ENCODE measurements at regions of chr15 and their contacts with region 1.

Region 1: GRCh38 chr15:65869127-65869953 is at the start of gene RAB11A:
- DNase-seq: peak; percentile 94 to 96
- H3K4me3 ChIP-seq: peak within 1 kb of the TSS; percentile 96
- H3K4me3 Mint-ChIP-seq: peak within 1 kb of the TSS; percentile 98
- H3K27ac Mint-ChIP-seq: peak within 1 kb of the TSS; percentile 97
- H3K4me1 ChIP-seq: no peaks in the 10 kb centered on the region
- H3K4me1 Mint-ChIP-seq: peaks cover 10% of the 10 kb centered on the region
- H3K27me3 ChIP-seq: no peaks in the 10 kb centered on the region
- H3K27me3 Mint-ChIP-seq: peaks cover 3% of the 10 kb centered on the region
- CTCF ChIP-seq: peak in 1 of 2 experiments; percentile 47
- total RNA-seq, gene RAB11A: 208 and 232 TPM in 2 replicates

Region 2: DNA sequence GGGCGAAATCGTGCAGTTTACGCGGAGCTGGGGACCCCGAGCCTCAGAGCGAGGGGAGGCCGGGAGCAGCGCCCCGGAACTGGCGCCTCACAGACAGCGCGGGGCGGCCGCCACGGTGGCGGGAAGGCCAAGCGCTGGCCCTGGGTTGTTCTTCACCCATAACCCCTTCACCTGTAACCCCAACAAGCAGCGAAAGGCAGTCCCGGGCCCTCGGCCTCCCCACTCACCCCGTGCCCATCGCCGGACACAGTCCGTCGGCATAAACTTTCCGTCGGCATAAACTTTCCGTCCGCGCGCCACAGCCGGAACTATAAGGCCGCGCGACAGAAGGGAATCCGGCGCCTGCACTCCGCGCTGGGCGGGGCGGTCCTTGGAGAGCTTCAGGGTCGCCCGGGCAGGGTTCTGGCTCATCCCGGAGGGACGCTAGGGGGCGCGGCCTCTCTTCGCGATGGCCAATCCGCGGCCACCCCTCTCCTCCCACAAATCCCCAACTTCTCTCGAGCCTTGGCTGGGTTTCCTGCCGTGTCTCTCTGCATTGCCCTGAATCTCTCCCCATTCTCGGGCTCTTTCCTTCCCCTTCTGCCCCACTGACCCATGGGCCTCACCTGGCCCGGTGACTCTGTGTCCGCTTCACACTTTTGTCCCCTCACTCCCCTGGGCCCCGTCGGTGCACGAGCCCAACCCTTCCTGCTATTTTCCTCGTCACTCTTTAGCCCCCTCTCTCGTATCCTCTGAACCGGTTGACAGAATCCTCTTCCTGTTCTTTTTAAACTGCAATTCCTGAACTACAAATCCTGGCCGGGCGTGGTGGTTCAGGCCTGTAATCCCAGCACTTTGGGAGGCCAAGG is 258.2 kb before region 1 on chr15 and contains the start of gene INTS14:
- CTCF ChIA-PET with region 1: interaction called, 9 read pairs
- POLR2A ChIA-PET with region 1: interaction called, 5 read pairs
- intact Hi-C with region 1: loop called (anchors 1 kb)
- DNase-seq: peak; percentile 96 to 98
- H3K4me3 ChIP-seq: peak within 1 kb of the TSS; percentile 63
- H3K4me3 Mint-ChIP-seq: peak within 1 kb of the TSS; percentile 97
- H3K27ac Mint-ChIP-seq: peak within 1 kb of the TSS; percentile 99
- H3K4me1 ChIP-seq: peaks cover 9% of the 10 kb centered on the region
- H3K4me1 Mint-ChIP-seq: peaks cover 7% of the 10 kb centered on the region
- H3K27me3 ChIP-seq: no peaks in the 10 kb centered on the region
- H3K27me3 Mint-ChIP-seq: no peaks in the 10 kb centered on the region
- CTCF ChIP-seq: peak; percentile 66 to 69
- total RNA-seq, gene INTS14: 37.7 and 38.2 TPM in 2 replicates

Region 3: DNA sequence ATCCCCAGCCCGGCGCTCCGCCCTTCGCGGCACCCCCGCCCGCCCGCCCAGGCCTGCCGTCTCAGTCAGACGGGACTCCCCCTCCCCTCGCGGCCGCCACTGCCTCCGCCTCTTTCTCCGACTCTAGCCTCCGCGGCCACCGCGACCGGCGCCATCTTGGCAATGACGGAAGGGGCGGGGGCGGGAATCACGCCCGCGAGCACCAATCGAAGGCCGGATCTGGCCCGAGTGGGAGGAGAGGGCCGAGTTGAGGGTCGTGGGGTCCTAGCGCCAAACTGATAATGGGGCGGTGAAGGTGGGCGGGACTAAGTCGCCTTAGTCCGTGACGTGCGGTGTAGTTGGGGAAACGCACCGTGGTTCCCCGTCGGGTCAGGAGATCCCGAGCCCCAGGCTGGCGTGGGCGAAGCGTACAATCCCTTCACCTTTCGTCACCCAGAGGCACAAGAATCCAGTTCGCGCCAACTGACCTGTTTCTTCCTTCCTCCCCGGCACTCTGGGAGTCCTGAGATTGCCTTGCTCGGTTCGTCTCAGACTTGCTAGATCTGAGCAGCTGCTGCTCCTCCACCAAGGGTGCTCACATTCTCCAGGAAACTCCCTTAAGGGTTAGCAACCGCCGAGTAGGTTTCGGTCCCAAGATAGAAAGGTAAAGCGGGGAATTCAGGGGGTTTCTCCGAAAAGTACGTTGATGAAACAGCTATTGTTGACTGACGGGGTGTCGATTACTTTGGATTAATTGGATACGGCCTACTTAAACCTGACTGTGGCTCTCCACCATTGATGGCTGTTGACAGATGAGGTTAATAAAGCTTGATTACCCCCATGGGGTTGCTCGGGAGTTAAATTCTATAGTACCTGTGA is 77.0 kb before region 1 on chr15 and contains the start of gene DENND4A:
- CTCF ChIA-PET with region 1: no interaction called
- POLR2A ChIA-PET with region 1: interaction called, 12 read pairs
- intact Hi-C with region 1: no loop called
- DNase-seq: peak; percentile 97
- H3K4me3 ChIP-seq: peak within 1 kb of the TSS; percentile 74
- H3K4me3 Mint-ChIP-seq: peak within 1 kb of the TSS; percentile 95
- H3K27ac Mint-ChIP-seq: peak within 1 kb of the TSS; percentile 97
- H3K4me1 ChIP-seq: peaks cover 11% of the 10 kb centered on the region; the same call in 1 of the 2 replicates
- H3K4me1 Mint-ChIP-seq: peaks cover 16% of the 10 kb centered on the region
- H3K27me3 ChIP-seq: no peaks in the 10 kb centered on the region
- H3K27me3 Mint-ChIP-seq: no peaks in the 10 kb centered on the region
- CTCF ChIP-seq: no peak
- total RNA-seq, gene DENND4A: 12.7 and 12.9 TPM in 2 replicates

Region 4: GRCh38 chr15:65902378-65902777 is 33.0 kb after region 1 on chr15:
- CTCF ChIA-PET with region 1: interaction called, 3 read pairs
- POLR2A ChIA-PET with region 1: interaction called, 10 read pairs
- intact Hi-C with region 1: loop called (anchors 1 kb)
- DNase-seq: peak; percentile 72 to 86
- H3K4me3 ChIP-seq: no peak overlapping the region
- H3K4me3 Mint-ChIP-seq: peak overlapping the region; percentile 53
- H3K27ac Mint-ChIP-seq: peak overlapping the region; percentile 94
- H3K4me1 ChIP-seq: peaks cover 79% of the 10 kb centered on the region
- H3K4me1 Mint-ChIP-seq: peaks cover 55% of the 10 kb centered on the region
- H3K27me3 ChIP-seq: no peaks in the 10 kb centered on the region
- H3K27me3 Mint-ChIP-seq: no peaks in the 10 kb centered on the region
- CTCF ChIP-seq: no peak

Region 5: DNA sequence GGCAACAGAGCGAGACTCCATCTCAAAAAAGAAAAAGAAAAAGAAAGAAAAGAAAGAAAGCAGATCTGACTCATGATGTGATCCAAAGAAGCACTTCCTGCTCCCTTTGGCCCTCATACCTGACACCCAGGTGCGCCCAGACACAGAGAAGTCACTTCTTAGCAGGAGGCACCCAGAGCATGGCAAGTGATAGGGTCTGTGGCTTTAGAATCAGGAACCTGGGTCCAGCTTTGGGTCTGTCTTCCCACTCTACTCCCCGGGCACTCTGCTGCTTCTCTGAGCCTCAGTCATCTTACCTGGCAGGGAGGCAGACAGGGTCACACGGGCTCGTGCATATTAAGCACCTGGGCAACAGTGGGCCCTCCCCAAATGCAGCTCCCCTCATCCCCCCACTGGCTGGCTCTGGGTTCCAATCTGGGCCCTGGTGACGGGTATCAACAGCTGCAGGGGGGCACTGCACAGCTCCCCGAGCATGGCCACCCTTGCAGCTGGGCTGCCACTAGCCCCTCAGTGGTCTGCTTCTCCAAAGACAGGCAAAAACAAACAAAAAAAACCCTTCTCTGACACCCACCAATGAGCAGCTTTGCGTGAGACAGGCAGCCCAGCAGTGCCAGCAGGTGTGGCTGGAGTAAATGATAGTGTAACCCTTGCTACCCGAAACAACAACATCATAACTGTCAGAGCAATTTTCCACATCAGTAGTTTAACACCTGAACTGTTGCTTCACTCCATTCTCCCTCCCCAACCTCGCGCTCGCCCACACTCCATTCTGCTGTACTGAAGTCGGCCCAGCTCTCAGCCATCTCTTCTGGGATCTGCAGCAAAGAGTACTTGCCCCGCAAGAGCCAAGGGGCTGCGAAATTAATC is 284.4 kb after region 1 on chr15:
- CTCF ChIA-PET with region 1: no interaction called
- POLR2A ChIA-PET with region 1: no interaction called
- intact Hi-C with region 1: no loop called
- DNase-seq: no peak
- H3K4me3 ChIP-seq: no peak overlapping the region
- H3K4me3 Mint-ChIP-seq: no peak overlapping the region
- H3K27ac Mint-ChIP-seq: no peak overlapping the region
- H3K4me1 ChIP-seq: no peaks in the 10 kb centered on the region
- H3K4me1 Mint-ChIP-seq: no peaks in the 10 kb centered on the region
- H3K27me3 ChIP-seq: no peaks in the 10 kb centered on the region; the same call in none of the 2 replicates
- H3K27me3 Mint-ChIP-seq: peaks cover 23% of the 10 kb centered on the region
- CTCF ChIP-seq: no peak

Region 6: GRCh38 chr15:66221126-66221525 is 351.8 kb after region 1 on chr15:
- CTCF ChIA-PET with region 1: no interaction called
- POLR2A ChIA-PET with region 1: no interaction called
- intact Hi-C with region 1: no loop called
- DNase-seq: no peak
- H3K4me3 ChIP-seq: no peak overlapping the region
- H3K4me3 Mint-ChIP-seq: no peak overlapping the region
- H3K27ac Mint-ChIP-seq: no peak overlapping the region
- H3K4me1 ChIP-seq: no peaks in the 10 kb centered on the region
- H3K4me1 Mint-ChIP-seq: no peaks in the 10 kb centered on the region
- H3K27me3 ChIP-seq: no peaks in the 10 kb centered on the region; the same call in 1 of the 2 replicates
- H3K27me3 Mint-ChIP-seq: peaks cover 17% of the 10 kb centered on the region
- CTCF ChIP-seq: no peak